PC-9 (cell line): ENCODE measurements at regions of chr2 and their contacts with region 1.

Region 1: GRCh38 chr2:108594132-108594981 is 60.1 kb downstream of the LIMS1 start:
- DNase-seq: peak; percentile 10 to 62
- H3K4me3 ChIP-seq: no peak overlapping the region; the same call in 1 of the 2 replicates
- H3K27ac ChIP-seq: peak overlapping the region; percentile 74
- H3K4me1 ChIP-seq: peaks cover 29% of the 10 kb centered on the region
- H3K27me3 ChIP-seq: no peaks in the 10 kb centered on the region
- CTCF ChIP-seq: no peak

Region 2: GRCh38 chr2:108621087-108621559 is 26.8 kb after region 1 on chr2:
- CTCF ChIA-PET with region 1: no interaction called
- POLR2A ChIA-PET with region 1: interaction called, 9 read pairs
- intact Hi-C with region 1: loop called (anchors 2 kb)
- DNase-seq: peak; percentile 40 to 61
- H3K4me3 ChIP-seq: no peak overlapping the region
- H3K27ac ChIP-seq: peak overlapping the region; percentile 17; the same call in 1 of the 2 replicates
- H3K4me1 ChIP-seq: peaks cover 44% of the 10 kb centered on the region
- H3K27me3 ChIP-seq: no peaks in the 10 kb centered on the region
- CTCF ChIP-seq: no peak

Region 3: GRCh38 chr2:109031476-109032228 is 437.3 kb after region 1 on chr2:
- CTCF ChIA-PET with region 1: no interaction called
- POLR2A ChIA-PET with region 1: no interaction called
- intact Hi-C with region 1: no loop called
- DNase-seq: peak in 1 of 2 experiments; percentile 21
- H3K4me3 ChIP-seq: no peak overlapping the region
- H3K27ac ChIP-seq: no peak overlapping the region
- H3K4me1 ChIP-seq: no peaks in the 10 kb centered on the region
- H3K27me3 ChIP-seq: no peaks in the 10 kb centered on the region
- CTCF ChIP-seq: no peak